Activated CD4-positive, alpha-beta T cell treated with anti-CD3 and anti-CD28 coated beads for 36 hours (primary cell): ENCODE measurements at regions of chr16 and their contacts with region 1.

Region 1: GRCh38 chr16:12067714-12068401 is 91.3 kb downstream of the SNX29 start:
- DNase-seq: peak; percentile 67
- ATAC-seq: peak; percentile 83
- H3K4me3 Mint-ChIP-seq: no peak overlapping the region
- H3K27ac Mint-ChIP-seq: no peak overlapping the region
- H3K4me1 Mint-ChIP-seq: no peaks in the 10 kb centered on the region
- H3K27me3 Mint-ChIP-seq: no peaks in the 10 kb centered on the region

Region 2: GRCh38 chr16:11715246-11715947 is 352.5 kb before region 1 on chr16:
- CTCF ChIA-PET with region 1: no interaction called
- POLR2A ChIA-PET with region 1: no interaction called
- intact Hi-C with region 1: no loop called
- DNase-seq: no peak
- ATAC-seq: no peak
- H3K4me3 Mint-ChIP-seq: no peak overlapping the region
- H3K27ac Mint-ChIP-seq: no peak overlapping the region
- H3K4me1 Mint-ChIP-seq: peaks cover 6% of the 10 kb centered on the region
- H3K27me3 Mint-ChIP-seq: no peaks in the 10 kb centered on the region

Region 3: DNA sequence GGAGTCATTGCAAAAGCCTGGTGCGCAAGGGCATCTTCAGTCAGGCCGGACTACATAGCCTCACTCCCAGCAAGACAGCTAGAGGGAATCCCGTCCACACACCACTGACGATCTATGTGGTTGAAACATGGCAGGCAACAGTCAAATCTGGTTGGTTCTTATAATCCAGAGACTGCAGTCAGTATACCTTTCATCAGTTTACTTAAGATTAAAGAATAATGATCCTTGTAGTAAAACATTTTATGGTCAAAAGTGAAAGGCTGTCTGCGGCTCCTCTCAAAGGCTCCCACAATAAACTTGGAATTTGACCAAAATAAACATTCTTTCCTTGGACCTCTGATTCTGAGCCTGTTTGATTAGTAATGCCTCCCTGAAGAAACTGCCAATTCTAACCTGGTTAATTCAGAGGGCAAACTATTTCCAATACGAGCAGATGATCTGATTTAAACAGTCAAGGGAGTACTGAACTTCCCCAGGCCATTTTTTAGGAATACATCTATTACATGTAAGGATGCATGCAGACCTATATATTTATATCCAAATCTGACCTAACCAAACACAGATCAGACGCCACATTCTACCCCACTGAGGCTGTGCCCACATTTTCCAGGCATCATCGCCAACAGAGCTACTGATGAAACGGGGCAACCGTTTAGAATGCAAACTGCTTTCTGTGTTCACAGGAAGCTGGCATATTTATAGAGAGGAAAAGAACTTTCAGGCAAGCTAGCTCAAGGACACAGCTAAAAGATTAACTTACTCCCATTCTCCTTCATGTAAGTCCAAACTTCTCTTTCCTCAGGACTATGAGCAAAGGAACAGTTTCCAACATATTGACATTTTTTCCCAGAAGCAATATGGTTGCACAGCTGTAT is 309.9 kb before region 1 on chr16:
- CTCF ChIA-PET with region 1: no interaction called
- POLR2A ChIA-PET with region 1: no interaction called
- intact Hi-C with region 1: loop called in 1 of 2 experiments (anchors 10 kb)
- DNase-seq: no peak
- ATAC-seq: no peak
- H3K4me3 Mint-ChIP-seq: no peak overlapping the region
- H3K27ac Mint-ChIP-seq: no peak overlapping the region
- H3K4me1 Mint-ChIP-seq: no peaks in the 10 kb centered on the region
- H3K27me3 Mint-ChIP-seq: no peaks in the 10 kb centered on the region

Region 4: DNA sequence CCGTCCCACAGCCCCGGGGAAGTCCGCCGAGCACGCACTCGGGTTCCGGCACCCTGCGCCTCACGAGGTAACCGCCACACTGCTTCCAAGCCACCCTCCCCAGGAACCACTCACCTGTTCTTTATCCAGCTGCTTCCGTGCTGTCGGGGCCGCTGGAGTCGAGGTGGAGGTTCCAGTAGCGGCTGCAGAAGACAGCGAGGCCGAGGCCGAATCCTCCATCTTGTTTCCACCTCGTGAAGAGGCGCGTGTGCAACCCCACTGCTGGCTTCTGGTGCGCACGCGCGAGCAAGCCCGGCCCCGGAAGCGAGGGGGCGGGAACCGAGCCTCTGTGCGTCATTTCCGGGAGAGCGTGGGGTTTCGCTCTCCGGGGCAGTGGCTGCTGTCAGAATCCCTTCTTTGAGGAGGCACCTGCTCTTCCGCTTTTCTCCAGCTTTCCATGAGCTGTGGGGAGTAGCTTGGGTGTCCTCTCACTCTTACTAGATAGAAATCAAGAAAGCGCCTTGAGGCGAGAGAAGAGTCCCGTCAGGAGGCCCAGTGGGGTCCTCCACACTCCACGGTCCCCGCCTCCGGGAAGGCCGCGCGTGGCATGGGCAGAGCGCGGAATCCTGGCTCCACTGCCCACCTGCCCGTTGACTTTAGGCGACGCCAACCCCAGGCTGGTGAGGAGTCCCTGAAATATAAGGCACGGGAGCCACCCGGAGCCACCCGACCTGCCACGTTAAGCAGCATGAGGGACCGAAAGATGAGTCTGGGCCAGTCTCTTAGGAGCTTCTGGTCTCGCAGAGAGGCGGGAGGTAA is 216.4 kb before region 1 on chr16 and contains the start of gene RSL1D1:
- CTCF ChIA-PET with region 1: interaction called, 3 read pairs
- POLR2A ChIA-PET with region 1: no interaction called
- intact Hi-C with region 1: loop called in 1 of 2 experiments (anchors 1 kb)
- DNase-seq: peak; percentile 96
- ATAC-seq: peak; percentile 85
- H3K4me3 Mint-ChIP-seq: peak within 1 kb of the TSS; percentile 99
- H3K27ac Mint-ChIP-seq: peak within 1 kb of the TSS; percentile 96
- H3K4me1 Mint-ChIP-seq: peaks cover 52% of the 10 kb centered on the region
- H3K27me3 Mint-ChIP-seq: no peaks in the 10 kb centered on the region
- total RNA-seq, gene RSL1D1: 369 to 466 TPM

Region 5: DNA sequence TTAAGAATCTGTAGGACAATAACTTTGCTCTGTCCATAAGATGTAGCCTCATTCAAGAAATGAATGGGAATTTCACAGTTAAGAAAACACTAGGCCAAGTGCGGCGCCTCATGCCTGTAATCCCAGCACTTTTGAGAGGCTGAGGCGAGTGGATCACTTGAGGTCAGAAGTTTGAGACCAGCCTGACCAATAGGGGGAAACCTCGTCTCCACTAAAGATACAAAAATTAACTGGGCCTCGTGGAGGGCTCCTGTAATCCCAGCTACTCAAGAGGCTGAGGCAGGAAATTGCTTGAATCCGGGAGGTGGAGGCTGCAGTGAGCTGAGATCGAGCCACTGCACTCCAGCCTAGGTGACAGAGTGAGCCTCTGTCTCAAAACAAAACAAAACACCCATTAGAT is 196.7 kb before region 1 on chr16:
- CTCF ChIA-PET with region 1: interaction called, 7 read pairs
- POLR2A ChIA-PET with region 1: interaction called, 3 read pairs
- intact Hi-C with region 1: loop called in 1 of 2 experiments (anchors 5 kb)
- DNase-seq: no peak
- ATAC-seq: no peak
- H3K4me3 Mint-ChIP-seq: no peak overlapping the region
- H3K27ac Mint-ChIP-seq: peak overlapping the region; percentile 14
- H3K4me1 Mint-ChIP-seq: no peaks in the 10 kb centered on the region
- H3K27me3 Mint-ChIP-seq: no peaks in the 10 kb centered on the region

Region 6: DNA sequence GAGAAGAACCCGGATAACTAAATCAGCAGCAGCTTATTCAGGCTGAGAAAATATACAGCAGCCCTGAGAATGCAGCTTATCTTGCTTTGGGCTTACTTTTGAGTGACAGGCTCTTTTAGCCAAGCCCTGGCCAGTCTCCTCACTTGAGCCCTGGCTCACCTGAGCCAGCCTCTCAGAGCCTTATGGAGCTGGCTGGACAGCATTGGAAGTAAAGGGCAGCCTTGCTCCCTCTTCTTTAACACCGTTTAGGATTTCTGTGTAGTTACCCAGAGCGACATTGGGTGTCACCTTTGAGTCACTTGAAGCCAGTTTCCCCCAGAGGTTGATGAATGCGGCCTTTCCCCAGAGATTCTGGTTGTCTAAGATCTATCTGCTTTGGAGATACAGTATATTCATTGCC is 118.3 kb before region 1 on chr16:
- CTCF ChIA-PET with region 1: interaction called, 15 read pairs
- POLR2A ChIA-PET with region 1: no interaction called
- intact Hi-C with region 1: loop called (anchors 1 kb)
- DNase-seq: peak; percentile 25
- ATAC-seq: peak; percentile 69
- H3K4me3 Mint-ChIP-seq: no peak overlapping the region
- H3K27ac Mint-ChIP-seq: no peak overlapping the region
- H3K4me1 Mint-ChIP-seq: no peaks in the 10 kb centered on the region
- H3K27me3 Mint-ChIP-seq: no peaks in the 10 kb centered on the region

Region 7: GRCh38 chr16:12111223-12111622 is 43.4 kb after region 1 on chr16:
- CTCF ChIA-PET with region 1: no interaction called
- POLR2A ChIA-PET with region 1: no interaction called
- intact Hi-C with region 1: no loop called
- DNase-seq: no peak
- ATAC-seq: no peak
- H3K4me3 Mint-ChIP-seq: no peak overlapping the region
- H3K27ac Mint-ChIP-seq: no peak overlapping the region
- H3K4me1 Mint-ChIP-seq: no peaks in the 10 kb centered on the region
- H3K27me3 Mint-ChIP-seq: no peaks in the 10 kb centered on the region

Region 8: GRCh38 chr16:12184419-12184917 is 116.6 kb after region 1 on chr16:
- CTCF ChIA-PET with region 1: no interaction called
- POLR2A ChIA-PET with region 1: no interaction called
- intact Hi-C with region 1: no loop called
- DNase-seq: no peak
- ATAC-seq: no peak
- H3K4me3 Mint-ChIP-seq: no peak overlapping the region
- H3K27ac Mint-ChIP-seq: no peak overlapping the region
- H3K4me1 Mint-ChIP-seq: no peaks in the 10 kb centered on the region
- H3K27me3 Mint-ChIP-seq: no peaks in the 10 kb centered on the region